ENCODE measurements at regions of chr16 and their contacts with region 1.

Region 1: DNA sequence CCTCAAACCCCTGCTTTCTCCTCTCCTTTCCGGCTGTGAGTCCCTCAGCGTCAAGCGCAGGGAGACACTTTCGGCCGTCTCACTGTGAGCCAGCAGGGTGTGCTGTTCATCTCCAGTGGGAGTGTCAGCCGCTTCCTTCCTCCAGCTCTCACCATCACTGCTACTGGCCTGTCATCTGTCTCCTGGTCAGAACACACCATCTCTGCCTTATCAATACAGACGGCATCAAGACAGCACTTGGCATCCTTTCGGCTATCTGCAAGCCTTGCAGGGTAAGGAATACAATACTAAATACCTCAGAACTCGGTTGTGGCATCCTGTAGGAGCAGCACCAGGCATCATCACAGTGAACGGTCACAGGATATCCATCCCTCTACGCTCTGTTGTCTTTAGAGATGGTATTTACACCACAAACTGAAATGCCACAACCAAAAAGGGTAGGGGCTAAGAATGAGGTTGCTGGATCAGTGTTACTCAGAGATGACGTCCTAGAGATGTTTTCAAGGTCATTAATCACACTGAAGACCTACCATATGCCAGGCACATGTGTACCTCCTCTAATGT is 20.7 kb upstream of the CMTM4 start:
- DNase-seq: peak; percentile 42
- H3K4me3 ChIP-seq: no peak overlapping the region
- CTCF ChIP-seq: peak; percentile 94

Region 2: DNA sequence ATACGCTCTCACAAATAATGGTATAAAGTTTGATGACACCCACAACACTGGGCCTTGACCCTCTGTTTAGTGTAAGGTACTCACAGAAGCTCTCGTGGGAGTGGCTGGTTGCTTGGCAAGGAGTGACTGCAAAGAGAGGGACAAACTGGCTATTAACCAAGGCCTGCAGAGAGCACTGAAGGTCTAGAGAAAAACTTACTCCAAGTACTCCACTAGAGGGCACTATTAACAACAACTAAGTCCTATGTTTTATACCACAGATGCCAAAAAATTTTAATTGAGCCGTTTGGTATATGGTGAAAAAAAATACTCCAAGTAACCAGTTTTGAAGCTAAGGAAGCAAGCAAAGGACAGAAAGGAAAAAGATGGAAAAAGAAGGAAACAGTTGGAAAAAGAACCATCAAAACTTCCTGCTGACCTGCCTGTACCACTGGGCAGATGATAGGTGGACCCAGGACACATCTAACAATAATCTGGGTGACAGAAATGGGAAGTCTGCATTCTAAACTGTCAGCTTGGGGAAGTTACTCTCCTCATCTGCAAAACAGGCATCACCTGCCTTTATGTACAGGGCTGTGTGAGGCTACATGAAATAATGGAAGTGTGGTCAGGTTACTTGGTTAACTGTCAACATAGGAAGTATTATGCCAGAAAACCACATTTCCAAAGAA is 11.1 kb after region 1 on chr16:
- CTCF ChIA-PET with region 1: interaction called, 50 read pairs
- POLR2A ChIA-PET with region 1: no interaction called
- DNase-seq: no peak
- H3K4me3 ChIP-seq: no peak overlapping the region
- CTCF ChIP-seq: peak; percentile 51

Measured in AG04449 (cell line).